PC-9 (cell line): ENCODE measurements at regions of chr9 and their contacts with region 1.

Region 1: GRCh38 chr9:98010445-98010844 is 27.3 kb downstream of the ANP32B start:
- DNase-seq: peak in 1 of 2 experiments; percentile 59
- H3K4me3 ChIP-seq: no peak overlapping the region
- H3K27ac ChIP-seq: no peak overlapping the region
- H3K4me1 ChIP-seq: no peaks in the 10 kb centered on the region
- H3K27me3 ChIP-seq: no peaks in the 10 kb centered on the region
- CTCF ChIP-seq: no peak

Region 2: DNA sequence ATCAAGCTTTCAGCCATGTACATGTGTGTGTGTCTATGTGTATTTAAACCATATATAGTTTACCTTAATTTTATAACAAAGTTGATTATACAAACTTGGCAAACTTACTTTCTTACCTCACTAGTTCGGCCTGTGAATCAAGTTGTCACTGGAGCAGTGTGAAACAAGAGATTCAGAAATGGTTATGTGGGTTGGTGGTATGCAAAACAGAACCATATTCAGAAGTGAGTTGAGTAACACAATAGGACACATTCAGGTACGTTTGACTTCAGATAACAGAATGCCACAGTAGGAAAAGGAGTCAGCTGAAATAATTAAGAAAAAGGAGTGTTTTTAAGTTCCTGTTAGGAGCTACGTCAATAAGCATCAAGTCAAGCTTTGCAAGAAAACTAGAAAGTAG is 334.8 kb before region 1 on chr9:
- CTCF ChIA-PET with region 1: no interaction called
- POLR2A ChIA-PET with region 1: no interaction called
- intact Hi-C with region 1: loop called (anchors 10 kb)
- DNase-seq: no peak
- H3K4me3 ChIP-seq: no peak overlapping the region
- H3K27ac ChIP-seq: no peak overlapping the region
- H3K4me1 ChIP-seq: no peaks in the 10 kb centered on the region
- H3K27me3 ChIP-seq: no peaks in the 10 kb centered on the region
- CTCF ChIP-seq: no peak

Region 3: GRCh38 chr9:97689401-97689800 is 321.0 kb before region 1 on chr9:
- CTCF ChIA-PET with region 1: no interaction called
- POLR2A ChIA-PET with region 1: interaction called, 21 read pairs
- intact Hi-C with region 1: no loop called
- DNase-seq: no peak
- H3K4me3 ChIP-seq: no peak overlapping the region
- H3K27ac ChIP-seq: no peak overlapping the region
- H3K4me1 ChIP-seq: no peaks in the 10 kb centered on the region; the same call in 1 of the 2 replicates
- H3K27me3 ChIP-seq: no peaks in the 10 kb centered on the region
- CTCF ChIP-seq: no peak

Region 4: GRCh38 chr9:98031935-98032334 is 21.5 kb after region 1 on chr9:
- CTCF ChIA-PET with region 1: no interaction called
- POLR2A ChIA-PET with region 1: no interaction called
- intact Hi-C with region 1: no loop called
- DNase-seq: no peak
- H3K4me3 ChIP-seq: no peak overlapping the region
- H3K27ac ChIP-seq: peak overlapping the region; percentile 31; the same call in 1 of the 2 replicates
- H3K4me1 ChIP-seq: peaks cover 20% of the 10 kb centered on the region
- H3K27me3 ChIP-seq: no peaks in the 10 kb centered on the region
- CTCF ChIP-seq: no peak

Region 5: DNA sequence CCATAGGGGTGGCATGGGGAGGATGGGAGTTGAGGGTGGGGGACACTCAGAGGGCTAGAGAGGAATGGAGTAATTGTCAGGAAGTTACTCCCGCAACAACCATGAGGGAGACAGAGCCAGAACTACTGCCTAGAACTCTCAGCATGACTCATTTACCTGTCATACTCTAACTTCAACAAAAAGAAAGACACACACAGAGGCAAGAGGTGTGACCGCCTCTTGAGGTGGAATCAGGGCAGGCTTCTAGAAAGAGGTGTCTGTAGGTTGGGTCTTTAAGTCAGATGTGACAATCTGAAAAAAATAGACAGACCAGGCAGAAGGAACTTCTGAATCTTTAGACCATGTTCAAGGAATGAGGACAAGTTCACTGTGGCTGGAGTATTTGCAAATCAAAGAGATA is 624.9 kb after region 1 on chr9:
- CTCF ChIA-PET with region 1: no interaction called
- POLR2A ChIA-PET with region 1: no interaction called
- intact Hi-C with region 1: no loop called
- DNase-seq: peak; percentile 15 to 57
- H3K4me3 ChIP-seq: no peak overlapping the region
- H3K27ac ChIP-seq: no peak overlapping the region
- H3K4me1 ChIP-seq: peaks cover 6% of the 10 kb centered on the region
- H3K27me3 ChIP-seq: no peaks in the 10 kb centered on the region
- CTCF ChIP-seq: no peak